ENCODE measurements at regions of chr17 and their contacts with region 1.

Region 1: DNA sequence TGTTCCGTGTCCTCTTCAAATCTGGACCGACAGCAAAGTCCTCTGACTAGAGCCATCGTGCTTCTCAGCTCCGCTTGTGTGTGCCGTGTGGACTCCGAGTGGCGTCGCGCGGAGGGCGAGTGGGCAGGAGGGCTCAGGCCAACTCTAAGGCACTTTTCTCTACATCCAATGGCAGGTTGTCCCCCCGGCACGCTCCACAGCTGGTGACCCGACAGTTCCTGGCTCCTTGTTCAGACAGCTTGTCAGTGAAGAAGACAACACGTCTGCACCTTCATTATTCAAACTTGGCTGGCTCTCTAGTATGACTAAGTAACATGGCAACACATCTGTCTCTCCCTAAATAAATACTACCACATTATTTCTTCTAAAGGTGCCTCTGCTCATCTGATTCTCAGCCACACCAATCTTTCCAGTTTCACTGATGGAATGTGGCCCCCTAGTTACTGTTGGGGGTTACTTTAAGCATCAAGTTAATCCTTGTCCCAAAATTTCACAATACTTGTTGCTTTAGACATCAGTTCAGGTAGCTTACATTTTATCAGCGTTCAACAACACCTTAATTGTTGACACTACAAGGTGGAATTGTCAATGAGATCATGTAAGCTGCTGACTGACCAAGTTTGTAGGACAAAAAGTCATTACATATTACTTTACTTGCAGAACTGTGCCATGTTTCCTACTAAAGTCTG is 15.4 kb downstream of the COG1 start:
- DNase-seq: no peak
- H3K4me3 ChIP-seq: no peak overlapping the region
- H3K27ac ChIP-seq: no peak overlapping the region
- H3K4me1 ChIP-seq: peaks cover 6 to 18% (median 14%) of the 10 kb centered on the region in 4 experiments
- H3K27me3 ChIP-seq: no peaks in the 10 kb centered on the region

Region 2: DNA sequence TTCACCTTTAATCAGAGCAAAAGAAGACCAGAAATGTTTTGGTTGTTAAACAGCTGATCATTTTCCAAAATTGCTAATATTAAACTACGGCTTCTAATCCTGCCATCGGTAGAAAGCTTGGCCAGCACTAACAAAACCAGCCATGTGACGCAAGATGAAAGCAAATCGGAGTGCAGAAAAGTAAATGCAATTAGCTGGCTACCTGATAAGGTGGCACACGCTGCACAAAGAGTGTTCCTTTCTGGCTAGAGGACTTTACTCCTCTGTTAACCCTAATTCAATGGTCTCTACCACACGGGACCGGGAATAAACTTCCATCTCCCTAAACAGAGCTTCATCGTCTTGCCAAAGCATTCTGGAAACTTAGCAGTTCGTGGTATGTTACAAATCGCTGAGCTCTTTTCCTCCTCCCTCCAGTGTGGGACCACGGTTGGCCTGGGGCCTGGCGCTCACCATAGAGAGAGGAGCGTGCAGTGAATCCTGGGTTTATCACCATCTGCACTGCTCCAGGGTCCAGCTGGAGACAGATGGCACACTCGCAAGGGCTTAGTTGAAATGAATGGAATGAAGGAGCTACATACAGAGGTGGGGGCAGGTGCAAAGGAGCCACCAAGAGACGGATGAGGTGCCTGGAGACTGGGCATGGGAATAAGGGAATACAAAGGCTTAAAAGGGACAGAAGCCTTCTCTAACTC is 25.5 kb before region 1 on chr17:
- CTCF ChIA-PET with region 1: no interaction called
- POLR2A ChIA-PET with region 1: no interaction called
- DNase-seq: no peak
- H3K4me3 ChIP-seq: no peak overlapping the region
- H3K27ac ChIP-seq: no peak overlapping the region
- H3K4me1 ChIP-seq: peaks cover 0 to 11% (median 3%) of the 10 kb centered on the region in 4 experiments
- H3K27me3 ChIP-seq: no peaks in the 10 kb centered on the region

Region 3: GRCh38 chr17:73196500-73196899 is 11.8 kb before region 1 on chr17:
- CTCF ChIA-PET with region 1: interaction called, 10 read pairs
- POLR2A ChIA-PET with region 1: no interaction called
- DNase-seq: no peak
- H3K4me3 ChIP-seq: no peak overlapping the region
- H3K27ac ChIP-seq: no peak overlapping the region
- H3K4me1 ChIP-seq: peaks cover 0 to 15% (median 12%) of the 10 kb centered on the region in 4 experiments
- H3K27me3 ChIP-seq: no peaks in the 10 kb centered on the region

Measured in common myeloid progenitor, CD34-positive (primary cell).